ENCODE measurements at regions of chrX and their contacts with region 1.

Region 1: GRCh38 chrX:129360175-129360574 is 163.1 kb downstream of the SMARCA1 start:
- DNase-seq: peak; percentile 62
- H3K4me3 Mint-ChIP-seq: no peak overlapping the region
- H3K27ac Mint-ChIP-seq: no peak overlapping the region
- H3K4me1 Mint-ChIP-seq: no peaks in the 10 kb centered on the region
- H3K27me3 Mint-ChIP-seq: no peaks in the 10 kb centered on the region
- CTCF ChIP-seq: peak; percentile 47

Region 2: DNA sequence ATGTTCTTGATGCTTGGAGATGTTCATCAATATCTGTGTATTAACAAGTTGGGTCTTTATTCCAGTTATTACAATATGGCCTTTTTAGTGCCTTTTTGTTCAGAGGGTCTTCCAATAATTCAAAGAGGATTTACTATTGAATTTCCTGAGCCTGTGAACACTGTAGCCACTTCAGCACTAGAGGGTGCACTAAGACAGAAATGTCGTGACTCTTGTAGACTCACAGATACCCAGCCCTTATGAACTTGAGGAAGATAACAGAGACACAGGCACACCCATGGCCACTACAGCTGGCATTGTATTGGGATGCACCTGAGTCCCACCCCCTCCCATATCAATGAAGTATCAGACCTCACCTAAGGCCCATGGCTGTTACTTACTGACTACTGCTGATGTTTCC is 1253.5 kb before region 1 on chrX:
- CTCF ChIA-PET with region 1: no interaction called
- POLR2A ChIA-PET with region 1: no interaction called
- intact Hi-C with region 1: loop called (anchors 2 kb)
- DNase-seq: peak; percentile 46
- H3K4me3 Mint-ChIP-seq: no peak overlapping the region
- H3K27ac Mint-ChIP-seq: no peak overlapping the region
- H3K4me1 Mint-ChIP-seq: no peaks in the 10 kb centered on the region
- H3K27me3 Mint-ChIP-seq: no peaks in the 10 kb centered on the region
- CTCF ChIP-seq: peak; percentile 36

Region 3: DNA sequence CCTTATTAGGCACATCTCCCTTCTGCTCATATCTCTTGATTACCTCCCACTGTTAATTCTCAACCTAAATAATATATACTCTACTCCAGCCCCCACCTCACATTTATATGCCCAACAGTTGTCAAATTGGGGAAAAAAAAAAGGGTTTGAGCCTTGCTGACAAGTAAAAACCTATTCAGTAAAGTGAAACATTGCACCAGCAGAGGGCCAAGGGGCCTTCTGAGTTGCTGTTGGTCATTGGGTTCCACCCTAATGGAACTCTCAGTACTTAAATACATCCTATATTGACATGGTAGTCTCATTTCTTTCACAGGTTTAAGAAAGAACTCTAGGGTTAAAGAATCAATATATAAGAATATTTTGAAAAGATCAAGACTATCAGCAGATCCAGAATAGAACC is 199.1 kb before region 1 on chrX:
- CTCF ChIA-PET with region 1: no interaction called
- POLR2A ChIA-PET with region 1: no interaction called
- intact Hi-C with region 1: no loop called
- DNase-seq: no peak
- H3K4me3 Mint-ChIP-seq: no peak overlapping the region
- H3K27ac Mint-ChIP-seq: no peak overlapping the region
- H3K4me1 Mint-ChIP-seq: peaks cover 3% of the 10 kb centered on the region
- H3K27me3 Mint-ChIP-seq: no peaks in the 10 kb centered on the region
- CTCF ChIP-seq: no peak

Region 4: DNA sequence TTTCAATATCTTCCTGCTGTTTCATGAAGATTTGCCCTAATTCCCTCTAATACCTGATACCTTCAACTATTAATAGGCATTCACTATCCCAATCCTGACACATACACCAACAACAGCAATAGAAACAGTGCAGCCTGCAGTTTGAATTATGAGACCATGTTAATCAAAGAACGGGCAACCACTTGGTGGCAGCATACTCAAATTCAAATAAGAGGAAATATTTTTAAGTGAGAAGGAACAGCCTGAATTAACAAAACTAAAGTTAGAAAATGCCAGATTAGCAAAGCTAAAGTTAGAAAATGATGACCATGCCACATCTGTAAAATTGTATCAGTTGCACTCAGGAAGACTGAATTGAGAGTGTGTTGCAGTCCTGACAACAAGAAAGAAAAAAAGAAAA is 41.8 kb before region 1 on chrX:
- CTCF ChIA-PET with region 1: interaction called, 4 read pairs
- POLR2A ChIA-PET with region 1: no interaction called
- intact Hi-C with region 1: loop called (anchors 5 kb)
- DNase-seq: peak; percentile 45
- H3K4me3 Mint-ChIP-seq: no peak overlapping the region
- H3K27ac Mint-ChIP-seq: no peak overlapping the region
- H3K4me1 Mint-ChIP-seq: no peaks in the 10 kb centered on the region
- H3K27me3 Mint-ChIP-seq: no peaks in the 10 kb centered on the region
- CTCF ChIP-seq: peak; percentile 34

Region 5: DNA sequence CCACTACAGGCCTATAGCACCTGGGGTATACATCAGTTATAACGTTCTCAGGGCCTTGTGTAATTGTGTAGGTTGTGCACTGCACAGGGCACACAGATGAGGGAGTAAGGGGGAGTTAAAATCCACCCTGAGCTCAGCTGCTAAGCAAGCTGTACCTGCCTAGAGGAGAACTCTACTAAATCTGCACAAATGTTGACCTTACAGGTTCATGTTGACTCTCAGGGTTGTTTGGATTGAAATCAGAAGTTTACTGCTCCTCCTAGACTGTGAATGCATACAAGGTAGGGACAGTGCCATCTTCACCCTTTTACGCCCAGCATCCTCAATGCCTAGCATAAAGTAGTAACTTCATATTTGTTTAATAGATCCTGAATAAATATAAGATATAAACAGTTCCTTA is 73.3 kb after region 1 on chrX:
- CTCF ChIA-PET with region 1: no interaction called
- POLR2A ChIA-PET with region 1: no interaction called
- intact Hi-C with region 1: no loop called
- DNase-seq: no peak
- H3K4me3 Mint-ChIP-seq: no peak overlapping the region
- H3K27ac Mint-ChIP-seq: no peak overlapping the region
- H3K4me1 Mint-ChIP-seq: no peaks in the 10 kb centered on the region
- H3K27me3 Mint-ChIP-seq: no peaks in the 10 kb centered on the region
- CTCF ChIP-seq: no peak